ENCODE measurements at regions of chr4 and their contacts with region 1.

Region 1: GRCh38 chr4:55546756-55547465 is at the start of gene CLOCK:
- DNase-seq: peak; percentile 88
- ATAC-seq: peak; percentile 76
- H3K4me3 Mint-ChIP-seq: peak within 1 kb of the TSS; percentile 92
- H3K27ac Mint-ChIP-seq: peak within 1 kb of the TSS; percentile 90
- H3K4me1 Mint-ChIP-seq: peaks cover 29% of the 10 kb centered on the region
- H3K27me3 Mint-ChIP-seq: peaks cover 6% of the 10 kb centered on the region
- CTCF ChIP-seq: no peak
- total RNA-seq, gene CLOCK: 10.4 and 12.9 TPM in 2 replicates

Region 2: DNA sequence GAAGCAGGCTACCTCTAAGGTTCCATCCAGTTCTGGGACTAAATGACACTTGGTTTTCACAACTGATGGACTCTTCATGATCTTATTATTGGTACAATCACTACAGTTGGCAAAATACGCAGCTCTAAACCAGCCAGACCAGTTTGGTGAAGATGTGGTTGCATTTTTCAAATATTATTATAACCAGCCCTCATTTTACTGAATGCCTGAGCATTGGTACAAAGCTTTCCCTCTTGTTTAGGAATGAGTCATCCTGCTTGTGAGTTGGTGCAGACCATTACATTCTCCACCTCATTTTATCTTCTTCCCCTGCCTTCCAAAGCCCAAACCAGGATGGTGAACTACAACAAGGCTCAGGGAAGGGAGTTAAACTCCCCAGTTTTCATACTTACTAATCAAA is 644.6 kb before region 1 on chr4:
- CTCF ChIA-PET with region 1: no interaction called
- POLR2A ChIA-PET with region 1: no interaction called
- intact Hi-C with region 1: no loop called
- DNase-seq: no peak
- ATAC-seq: no peak
- H3K4me3 Mint-ChIP-seq: no peak overlapping the region
- H3K27ac Mint-ChIP-seq: no peak overlapping the region
- H3K4me1 Mint-ChIP-seq: no peaks in the 10 kb centered on the region
- H3K27me3 Mint-ChIP-seq: no peaks in the 10 kb centered on the region
- CTCF ChIP-seq: no peak

Region 3: DNA sequence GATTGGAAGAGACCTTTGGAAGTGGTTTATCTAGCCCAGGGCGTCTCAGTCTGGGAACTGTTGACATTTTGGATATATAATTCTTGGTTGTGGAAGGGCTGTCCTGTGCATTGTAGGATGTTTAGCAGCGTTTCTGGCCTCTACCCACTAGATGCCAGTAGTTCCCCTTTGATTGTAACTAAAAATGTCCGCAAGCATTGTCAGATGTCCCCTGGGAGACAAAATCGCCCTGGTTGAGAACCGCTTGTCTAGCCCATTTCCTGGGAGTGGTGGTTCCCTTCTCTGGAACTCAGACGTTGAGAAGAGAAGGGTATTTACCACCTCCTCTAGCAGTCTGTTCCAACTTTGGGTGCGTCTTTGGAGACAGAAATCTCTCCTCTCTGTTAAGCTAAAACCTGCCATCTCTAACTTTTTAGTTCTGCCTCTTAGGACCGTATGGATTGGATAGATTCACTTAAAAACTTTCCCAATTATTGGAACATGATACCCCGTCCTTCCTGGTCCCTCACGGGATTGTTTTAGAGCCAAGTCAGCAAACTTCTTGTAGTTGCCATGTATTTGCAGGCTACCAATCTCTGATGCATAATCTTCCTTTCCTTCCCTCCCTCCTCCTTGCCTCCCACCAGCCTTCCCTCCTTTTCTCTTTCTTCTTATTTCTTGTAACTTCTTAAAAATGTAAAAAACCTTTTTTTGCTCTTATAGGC is 137.3 kb before region 1 on chr4:
- CTCF ChIA-PET with region 1: interaction called, 4 read pairs
- POLR2A ChIA-PET with region 1: no interaction called
- intact Hi-C with region 1: loop called (anchors 2 kb)
- DNase-seq: no peak
- ATAC-seq: peak; percentile 90
- H3K4me3 Mint-ChIP-seq: peak overlapping the region; percentile 32
- H3K27ac Mint-ChIP-seq: peak overlapping the region; percentile 76
- H3K4me1 Mint-ChIP-seq: peaks cover 25% of the 10 kb centered on the region
- H3K27me3 Mint-ChIP-seq: no peaks in the 10 kb centered on the region
- CTCF ChIP-seq: no peak

Region 4: DNA sequence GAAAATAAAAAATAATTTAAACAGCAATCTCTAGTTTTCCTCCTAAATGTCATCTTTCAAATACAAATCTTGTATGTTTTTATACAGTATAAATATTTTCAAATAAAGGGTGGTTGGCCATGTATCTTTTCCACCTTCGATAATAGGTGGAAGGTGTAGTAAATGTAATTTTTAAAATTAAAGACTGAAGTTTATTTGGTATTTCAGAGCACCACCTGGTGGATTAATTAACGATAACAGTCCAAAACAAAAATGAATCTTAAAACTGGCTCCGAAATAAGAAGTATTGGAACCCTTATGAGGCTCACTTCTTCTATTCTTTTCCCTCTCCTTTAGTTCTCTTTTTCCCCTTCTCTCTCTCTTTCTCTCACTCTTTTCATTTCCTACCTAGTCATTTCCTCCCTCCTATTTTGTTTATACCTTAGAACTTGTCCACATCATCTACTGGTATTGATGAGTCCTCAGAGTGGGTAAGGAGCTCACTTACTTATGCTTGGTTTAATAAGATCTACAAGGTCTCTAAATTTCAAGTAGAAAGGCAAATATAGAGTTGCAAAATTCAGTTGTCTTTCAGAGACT is 189.8 kb after region 1 on chr4:
- CTCF ChIA-PET with region 1: no interaction called
- POLR2A ChIA-PET with region 1: no interaction called
- intact Hi-C with region 1: loop called (anchors 2 kb)
- DNase-seq: no peak
- ATAC-seq: no peak
- H3K4me3 Mint-ChIP-seq: no peak overlapping the region
- H3K27ac Mint-ChIP-seq: no peak overlapping the region
- H3K4me1 Mint-ChIP-seq: no peaks in the 10 kb centered on the region
- H3K27me3 Mint-ChIP-seq: peaks cover 32% of the 10 kb centered on the region
- CTCF ChIP-seq: no peak

Region 5: GRCh38 chr4:56301181-56302076 is 754.5 kb after region 1 on chr4:
- CTCF ChIA-PET with region 1: no interaction called
- POLR2A ChIA-PET with region 1: no interaction called
- intact Hi-C with region 1: loop called (anchors 2 kb)
- DNase-seq: no peak
- ATAC-seq: peak; percentile 68
- H3K4me3 Mint-ChIP-seq: no peak overlapping the region
- H3K27ac Mint-ChIP-seq: no peak overlapping the region
- H3K4me1 Mint-ChIP-seq: peaks cover 6% of the 10 kb centered on the region
- H3K27me3 Mint-ChIP-seq: no peaks in the 10 kb centered on the region
- CTCF ChIP-seq: no peak

Region 6: GRCh38 chr4:56907489-56908205 is 1360.7 kb after region 1 on chr4 and contains the start of gene REST:
- CTCF ChIA-PET with region 1: no interaction called
- POLR2A ChIA-PET with region 1: no interaction called
- intact Hi-C with region 1: loop called (anchors 5 kb)
- DNase-seq: peak; percentile 90
- ATAC-seq: peak; percentile 59
- H3K4me3 Mint-ChIP-seq: peak within 1 kb of the TSS; percentile 91
- H3K27ac Mint-ChIP-seq: peak within 1 kb of the TSS; percentile 77
- H3K4me1 Mint-ChIP-seq: peaks cover 41% of the 10 kb centered on the region
- H3K27me3 Mint-ChIP-seq: no peaks in the 10 kb centered on the region
- CTCF ChIP-seq: no peak
- total RNA-seq, gene REST: 48.3 and 49.1 TPM in 2 replicates